Motor neuron (in vitro differentiated cells): ENCODE measurements at regions of chr3 and their contacts with region 1.

Region 1: DNA sequence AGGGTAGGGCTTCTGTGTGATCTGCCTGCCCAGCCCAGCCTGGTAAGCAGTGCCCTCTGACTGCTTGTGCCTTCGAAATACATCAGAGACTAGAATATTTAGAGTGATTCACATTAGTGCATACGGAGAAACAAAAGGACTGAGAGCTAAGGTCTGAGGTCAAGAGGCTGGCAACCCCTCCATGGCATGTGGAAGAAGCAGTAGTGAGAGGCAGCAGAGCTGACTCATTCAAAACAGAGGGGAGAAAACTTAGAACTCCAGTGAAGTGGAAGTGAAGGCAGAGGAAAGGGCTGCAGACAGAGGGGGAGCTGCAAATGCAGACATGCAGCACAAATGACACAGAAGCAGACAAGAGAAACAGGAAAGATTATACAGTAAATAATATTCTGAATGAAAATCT is 61.6 kb downstream of the ULK4 start:
- ATAC-seq: peak in 1 of 8 experiments; percentile 21
- H3K4me3 ChIP-seq: no peak overlapping the region
- H3K27ac ChIP-seq: no peak overlapping the region
- H3K4me1 ChIP-seq: peaks cover 0 to 3% of the 10 kb centered on the region in 2 donors

Region 2: GRCh38 chr3:42080452-42080891 is 180.2 kb after region 1 on chr3:
- in situ Hi-C with region 1: loop called in 3 of 9 experiments (anchors 25 kb)
- ATAC-seq: peak in 7 of 8 experiments; percentile 14 to 95 (median 79)
- H3K4me3 ChIP-seq: no peak overlapping the region
- H3K27ac ChIP-seq: no peak overlapping the region
- H3K4me1 ChIP-seq: peaks cover 8 to 21% of the 10 kb centered on the region in 2 donors

Region 3: DNA sequence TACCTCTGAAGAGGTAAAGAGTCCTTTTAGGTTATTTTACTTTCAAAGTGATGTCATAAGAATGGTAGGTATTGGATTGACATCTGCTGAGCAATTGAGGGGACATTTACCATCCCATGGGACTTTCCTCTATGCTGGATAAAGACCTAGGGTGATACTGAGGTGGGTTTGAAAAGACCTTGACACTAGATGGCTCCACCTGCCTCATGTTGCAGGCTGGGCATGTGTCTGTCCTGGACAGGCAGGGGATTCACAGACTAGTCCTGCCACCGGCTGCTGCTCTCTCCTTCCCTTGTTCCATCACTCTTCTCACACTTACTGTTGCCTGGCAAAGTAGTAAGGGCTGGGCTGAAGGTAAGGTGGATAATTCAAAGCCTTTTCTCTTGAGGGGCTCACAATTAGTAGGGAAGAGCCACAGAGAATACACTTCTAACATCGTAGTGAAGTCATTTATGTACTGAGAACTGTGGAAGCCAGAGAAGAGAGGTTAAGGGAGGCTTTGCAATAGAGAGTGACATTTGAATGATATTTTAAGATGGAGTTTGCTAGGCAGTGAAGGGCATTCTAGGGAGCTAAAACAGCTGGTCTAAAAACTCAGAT is 218.6 kb after region 1 on chr3:
- in situ Hi-C with region 1: loop called in 2 of 9 experiments (anchors 25 kb)
- ATAC-seq: peak; percentile 31 to 94 (median 72)
- H3K4me3 ChIP-seq: no peak overlapping the region
- H3K27ac ChIP-seq: peak overlapping the region in 1 of 2 donors; percentile 18
- H3K4me1 ChIP-seq: no peaks in the 10 kb centered on the region

Region 4: DNA sequence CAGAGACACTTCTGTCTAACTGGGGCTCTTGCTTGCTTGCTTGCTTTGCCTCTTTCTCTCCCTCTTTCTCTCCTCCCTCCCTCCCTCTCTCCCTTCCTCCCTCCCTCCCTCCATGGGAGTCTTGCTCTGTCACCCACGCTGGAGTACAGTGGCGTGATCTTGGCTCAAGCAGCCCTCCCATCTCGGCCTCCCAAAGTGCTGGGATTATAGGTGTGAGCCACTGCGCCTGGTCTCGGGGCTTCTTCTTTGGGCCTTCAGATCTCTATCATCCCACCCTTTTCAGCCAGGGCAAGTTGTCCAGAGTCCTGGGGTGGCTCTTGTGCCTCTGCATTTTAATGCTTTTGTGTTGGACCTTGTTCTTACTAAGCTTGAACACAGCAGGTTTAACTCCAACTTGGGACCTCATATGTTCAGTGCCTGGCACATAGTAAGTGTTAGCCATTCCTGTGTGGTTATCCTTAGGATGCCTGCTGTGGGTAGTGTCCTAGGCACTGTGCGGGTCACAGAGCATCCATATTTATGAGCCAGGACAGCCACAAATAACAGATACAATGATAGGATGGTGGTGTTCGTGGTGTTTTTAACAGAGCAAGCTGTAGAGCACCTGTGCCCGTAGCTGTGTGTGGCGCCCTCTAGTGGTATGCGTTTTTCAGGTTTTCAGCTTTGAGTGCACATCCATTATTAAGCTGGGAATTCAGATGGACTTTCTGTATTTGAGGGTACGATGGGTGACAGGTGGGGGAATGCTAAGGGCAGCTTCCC is 290.6 kb after region 1 on chr3:
- in situ Hi-C with region 1: loop called in 1 of 9 experiments (anchors 25 kb)
- ATAC-seq: peak; percentile 40 to 85 (median 78)
- H3K4me3 ChIP-seq: no peak overlapping the region
- H3K27ac ChIP-seq: no peak overlapping the region
- H3K4me1 ChIP-seq: peaks cover 5 to 10% of the 10 kb centered on the region in 2 donors

Region 5: DNA sequence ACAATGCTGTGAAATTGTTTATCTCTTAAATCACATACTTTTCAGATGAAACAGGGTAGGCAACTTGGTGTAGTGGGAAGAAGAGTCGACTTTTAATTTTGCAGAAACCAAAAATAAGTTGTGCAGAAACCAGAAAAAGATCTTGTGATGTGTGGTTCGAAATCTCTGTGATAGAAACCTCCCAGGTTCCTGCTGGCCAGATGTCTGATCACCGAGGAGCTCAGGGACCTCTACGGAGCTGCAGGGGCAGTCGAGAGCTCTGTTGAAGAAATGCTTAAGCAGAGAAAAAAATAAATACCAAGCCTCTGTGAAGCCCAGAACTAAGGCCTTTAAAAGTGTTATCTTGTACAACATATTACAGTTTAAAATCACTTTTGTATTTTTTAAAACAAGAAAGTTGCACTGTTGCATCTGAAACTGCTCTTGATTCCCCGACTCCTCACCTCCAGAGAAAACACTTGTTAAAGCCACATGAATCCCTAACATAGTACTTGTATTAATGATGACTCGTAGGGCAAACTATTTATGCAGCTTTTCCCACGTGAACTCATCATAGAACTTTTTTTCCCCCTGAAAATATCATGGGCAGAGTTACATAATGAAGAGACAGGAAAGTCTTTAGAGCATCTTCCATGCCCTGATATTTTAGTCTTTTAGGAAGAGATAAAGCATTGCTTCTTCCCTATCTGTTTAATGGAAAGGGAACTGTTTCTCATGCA is 314.5 kb after region 1 on chr3:
- in situ Hi-C with region 1: loop called in 1 of 9 experiments (anchors 25 kb)
- ATAC-seq: no peak
- H3K4me3 ChIP-seq: no peak overlapping the region
- H3K27ac ChIP-seq: no peak overlapping the region
- H3K4me1 ChIP-seq: no peaks in the 10 kb centered on the region

Region 6: GRCh38 chr3:42247576-42248027 is 347.3 kb after region 1 on chr3:
- in situ Hi-C with region 1: no loop called
- ATAC-seq: peak in 7 of 8 experiments; percentile 54 to 86 (median 78)
- H3K4me3 ChIP-seq: no peak overlapping the region
- H3K27ac ChIP-seq: no peak overlapping the region
- H3K4me1 ChIP-seq: peaks cover 0 to 2% of the 10 kb centered on the region in 2 donors